Activated T-helper 2 cell treated with anti-CD3 and anti-CD28 coated beads, Interferon-gamma antibody, Interleukin-2, Interleukin-4, amounts not matched to agents 10 μg/mL and 5 μg/mL and 100 μg/mL, durations not matched to agents 14 hours and 24 hours and 36 hours (primary cell): ENCODE measurements at regions of chr1 and their contacts with region 1.

Region 1: DNA sequence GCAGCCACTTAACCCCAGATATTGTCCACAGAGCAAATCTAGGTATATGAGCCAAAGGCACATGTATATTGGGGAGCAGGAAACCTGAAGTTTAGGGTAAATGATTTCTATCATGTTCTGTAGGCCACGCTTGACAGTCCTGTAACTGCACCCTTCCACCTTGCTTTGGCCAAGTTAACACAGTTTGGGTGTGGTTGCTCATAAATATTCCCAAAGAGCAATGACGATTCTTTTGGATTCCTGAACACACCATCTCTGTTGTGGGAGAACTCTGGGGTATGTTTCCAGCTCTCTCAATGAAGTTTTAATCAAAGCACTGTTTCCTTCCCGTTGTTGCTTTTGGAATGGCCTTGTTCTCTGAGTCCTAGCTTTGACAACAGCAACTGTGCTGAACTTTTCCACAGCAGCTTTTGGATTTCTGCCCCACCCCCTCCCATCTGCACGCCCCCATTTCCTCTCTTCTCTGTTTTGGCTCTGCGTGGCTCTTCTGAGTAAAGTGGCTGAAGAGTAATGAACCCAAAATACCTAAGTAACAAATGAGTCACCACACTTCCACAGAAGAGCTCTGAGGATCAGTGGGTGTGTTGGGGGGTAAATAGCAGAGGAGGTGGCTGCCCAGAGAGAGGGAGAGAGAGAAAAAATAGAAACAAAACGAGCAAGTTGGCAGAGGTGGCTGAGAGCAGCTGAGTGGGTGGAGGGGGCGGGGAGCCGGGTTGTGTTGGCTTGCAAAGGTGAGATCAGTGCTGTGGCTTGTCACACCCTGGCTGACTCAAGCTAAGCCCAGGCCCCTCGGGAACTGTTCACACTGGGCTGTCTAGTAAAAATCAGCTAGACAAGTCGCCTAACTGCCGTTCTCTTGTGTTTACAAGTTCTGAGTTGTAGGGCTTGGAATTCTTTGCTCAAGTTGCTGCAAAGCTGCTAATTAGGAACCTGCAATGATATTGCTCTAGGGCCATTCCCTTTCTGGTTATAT is 26.9 kb upstream of the RAP1A start:
- DNase-seq: peak; percentile 84
- H3K4me3 Mint-ChIP-seq: peak overlapping the region; percentile 54
- H3K27ac Mint-ChIP-seq: peak overlapping the region; percentile 89
- H3K4me1 Mint-ChIP-seq: peaks cover 74% of the 10 kb centered on the region
- H3K27me3 Mint-ChIP-seq: no peaks in the 10 kb centered on the region

Region 2: DNA sequence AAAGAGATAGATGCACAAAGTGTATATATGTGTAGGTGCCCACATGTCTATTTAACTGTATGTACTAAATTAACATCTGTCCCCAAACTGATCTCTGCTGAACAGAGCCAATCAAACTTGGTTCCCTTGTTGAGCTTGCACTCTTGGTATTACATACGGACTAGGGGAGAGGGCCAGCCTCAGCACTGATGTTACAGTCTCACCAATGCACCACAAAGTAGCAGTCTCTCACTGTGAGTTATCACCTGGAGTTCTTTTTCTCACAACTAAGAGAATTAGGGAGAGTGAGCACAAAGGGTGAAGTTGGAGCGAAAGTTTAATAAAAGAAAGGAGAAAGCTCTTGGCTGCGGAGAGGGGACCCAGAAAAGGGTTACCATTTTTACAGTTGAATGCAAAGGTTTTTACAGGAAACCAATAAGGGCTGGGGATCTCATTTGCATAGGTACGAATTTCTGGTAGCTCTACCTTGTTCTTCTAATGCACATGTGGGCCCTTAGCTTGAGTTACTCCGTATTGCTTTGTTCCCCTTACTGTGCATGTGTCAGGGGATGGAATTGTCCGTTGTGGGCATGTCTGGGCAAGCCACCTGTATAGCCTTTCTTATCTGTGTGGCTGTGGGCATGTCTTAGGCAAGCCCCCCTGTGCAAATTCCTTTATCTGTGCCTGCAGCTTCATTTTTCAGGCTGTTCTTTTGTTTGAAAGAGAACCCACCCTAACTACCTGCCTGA is 378.4 kb before region 1 on chr1:
- intact Hi-C with region 1: loop called (anchors 2 kb)
- DNase-seq: no peak
- H3K4me3 Mint-ChIP-seq: peak overlapping the region; percentile 53
- H3K27ac Mint-ChIP-seq: peak overlapping the region; percentile 91
- H3K4me1 Mint-ChIP-seq: peaks cover 79% of the 10 kb centered on the region
- H3K27me3 Mint-ChIP-seq: no peaks in the 10 kb centered on the region

Region 3: GRCh38 chr1:111516005-111516535 is 76.6 kb before region 1 on chr1:
- intact Hi-C with region 1: loop called (anchors 2 kb)
- DNase-seq: no peak
- H3K4me3 Mint-ChIP-seq: peak overlapping the region; percentile 3
- H3K27ac Mint-ChIP-seq: peak overlapping the region; percentile 59
- H3K4me1 Mint-ChIP-seq: peaks cover 44% of the 10 kb centered on the region
- H3K27me3 Mint-ChIP-seq: no peaks in the 10 kb centered on the region

Region 4: GRCh38 chr1:111570781-111571181 is 21.9 kb before region 1 on chr1:
- intact Hi-C with region 1: no loop called
- DNase-seq: no peak
- H3K4me3 Mint-ChIP-seq: no peak overlapping the region
- H3K27ac Mint-ChIP-seq: no peak overlapping the region
- H3K4me1 Mint-ChIP-seq: peaks cover 10% of the 10 kb centered on the region
- H3K27me3 Mint-ChIP-seq: no peaks in the 10 kb centered on the region

Region 5: DNA sequence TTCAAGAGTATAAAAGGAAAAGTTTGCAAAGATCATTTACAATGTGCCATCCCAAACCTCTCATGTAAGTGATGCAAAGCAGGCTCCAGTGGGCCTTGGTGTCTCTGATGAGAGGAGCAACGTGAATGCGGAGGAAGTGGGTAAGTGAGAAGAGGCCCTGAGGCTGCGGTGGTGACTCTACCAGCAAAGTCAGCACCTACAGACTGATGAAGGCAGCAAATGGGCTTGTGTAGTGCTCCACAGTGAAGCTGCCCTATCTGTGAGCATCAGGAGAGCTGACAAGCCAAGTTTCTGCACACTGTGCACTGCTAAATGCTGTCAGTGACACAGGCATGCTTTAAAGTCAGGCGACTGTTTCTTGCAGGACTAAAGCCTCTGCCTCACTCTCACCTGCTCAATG is 11.3 kb after region 1 on chr1:
- intact Hi-C with region 1: loop called (anchors 1 kb)
- DNase-seq: peak; percentile 82
- H3K4me3 Mint-ChIP-seq: peak overlapping the region; percentile 66
- H3K27ac Mint-ChIP-seq: peak overlapping the region; percentile 97
- H3K4me1 Mint-ChIP-seq: peaks cover 70% of the 10 kb centered on the region
- H3K27me3 Mint-ChIP-seq: no peaks in the 10 kb centered on the region

Region 6: DNA sequence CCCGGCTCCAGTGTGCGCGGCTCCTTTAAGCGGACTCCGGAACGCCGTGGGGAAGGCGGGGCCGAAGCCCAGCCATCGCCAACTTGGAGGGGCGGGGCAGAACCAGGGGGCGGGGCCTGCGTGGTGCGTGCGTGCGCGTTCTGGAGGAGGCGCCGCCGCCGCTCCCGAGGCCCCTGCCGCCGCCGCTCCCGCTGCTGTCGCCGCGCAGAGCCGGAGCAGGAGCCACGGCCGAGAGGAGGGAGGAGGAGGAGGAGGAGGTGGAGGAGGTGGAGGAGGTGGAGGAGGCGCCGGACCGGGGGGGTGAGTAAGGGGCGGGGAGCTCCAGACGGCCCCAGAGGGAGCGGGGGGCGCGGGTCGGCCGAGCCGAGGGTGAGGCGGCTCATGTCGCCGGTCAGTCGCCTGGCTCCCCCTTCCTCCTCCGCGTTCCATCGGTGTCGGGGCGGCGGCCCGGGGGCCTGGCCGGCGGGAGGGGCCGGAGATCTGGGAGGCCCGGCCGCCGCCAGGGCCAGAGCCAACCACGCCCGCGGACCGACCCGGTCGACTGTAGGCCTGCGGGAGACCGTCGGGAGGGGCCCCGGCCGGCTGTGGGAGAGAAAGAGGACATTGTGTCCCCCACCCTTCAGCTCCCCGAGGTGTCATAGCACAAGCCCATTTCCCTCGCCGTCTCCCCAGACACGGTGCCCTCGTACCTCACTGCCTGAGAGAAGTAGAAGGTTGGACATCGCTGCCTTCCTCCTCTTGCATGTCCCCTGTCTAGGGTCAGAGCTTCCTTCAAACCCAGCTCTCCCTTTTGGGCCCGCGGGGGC is 27.2 kb after region 1 on chr1 and contains the start of gene RAP1A:
- intact Hi-C with region 1: loop called (anchors 1 kb)
- DNase-seq: peak; percentile 87
- H3K4me3 Mint-ChIP-seq: peak within 1 kb of the TSS; percentile 96
- H3K27ac Mint-ChIP-seq: peak within 1 kb of the TSS; percentile 88
- H3K4me1 Mint-ChIP-seq: peaks cover 66% of the 10 kb centered on the region
- H3K27me3 Mint-ChIP-seq: no peaks in the 10 kb centered on the region
- total RNA-seq, gene RAP1A: 219 TPM in 2 replicates

Region 7: GRCh38 chr1:111628153-111628552 is 35.5 kb after region 1 on chr1:
- intact Hi-C with region 1: loop called (anchors 1 kb)
- DNase-seq: no peak
- H3K4me3 Mint-ChIP-seq: peak overlapping the region; percentile 65
- H3K27ac Mint-ChIP-seq: peak overlapping the region; percentile 84
- H3K4me1 Mint-ChIP-seq: peaks cover 78% of the 10 kb centered on the region
- H3K27me3 Mint-ChIP-seq: no peaks in the 10 kb centered on the region

Region 8: GRCh38 chr1:111656086-111657017 is 63.7 kb after region 1 on chr1:
- intact Hi-C with region 1: loop called (anchors 2 kb)
- DNase-seq: no peak
- H3K4me3 Mint-ChIP-seq: no peak overlapping the region
- H3K27ac Mint-ChIP-seq: peak overlapping the region; percentile 44
- H3K4me1 Mint-ChIP-seq: peaks cover 35% of the 10 kb centered on the region
- H3K27me3 Mint-ChIP-seq: no peaks in the 10 kb centered on the region

Region 9: GRCh38 chr1:113178522-113178921 is 1585.8 kb after region 1 on chr1:
- intact Hi-C with region 1: no loop called
- DNase-seq: no peak
- H3K4me3 Mint-ChIP-seq: no peak overlapping the region
- H3K27ac Mint-ChIP-seq: no peak overlapping the region
- H3K4me1 Mint-ChIP-seq: no peaks in the 10 kb centered on the region
- H3K27me3 Mint-ChIP-seq: peaks cover 43% of the 10 kb centered on the region